PC-9 (cell line): ENCODE measurements at regions of chr22 and their contacts with region 1.

Region 1: DNA sequence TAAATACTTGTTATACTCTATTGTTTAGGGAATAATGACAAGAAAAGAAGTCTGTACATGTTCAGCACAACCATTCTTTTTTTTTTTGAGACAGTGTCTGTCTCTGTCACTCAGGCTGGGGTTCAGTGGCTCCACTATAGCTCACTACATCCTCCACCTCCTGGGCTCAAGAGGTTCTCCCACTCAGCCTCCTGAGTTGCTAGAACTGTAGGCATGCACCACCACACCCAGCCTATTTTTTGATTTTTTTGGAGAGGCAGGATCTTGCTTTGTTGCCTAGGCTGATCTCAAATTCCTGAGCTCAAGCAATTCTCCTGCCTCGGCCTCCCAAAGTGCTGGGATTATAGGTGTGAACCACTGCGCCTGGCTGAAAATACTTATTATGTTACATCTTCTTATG is 250.0 kb downstream of the MIAT start:
- DNase-seq: no peak
- H3K4me3 ChIP-seq: no peak overlapping the region
- H3K27ac ChIP-seq: no peak overlapping the region
- H3K4me1 ChIP-seq: no peaks in the 10 kb centered on the region
- H3K27me3 ChIP-seq: peaks cover 53% of the 10 kb centered on the region
- CTCF ChIP-seq: no peak

Region 2: DNA sequence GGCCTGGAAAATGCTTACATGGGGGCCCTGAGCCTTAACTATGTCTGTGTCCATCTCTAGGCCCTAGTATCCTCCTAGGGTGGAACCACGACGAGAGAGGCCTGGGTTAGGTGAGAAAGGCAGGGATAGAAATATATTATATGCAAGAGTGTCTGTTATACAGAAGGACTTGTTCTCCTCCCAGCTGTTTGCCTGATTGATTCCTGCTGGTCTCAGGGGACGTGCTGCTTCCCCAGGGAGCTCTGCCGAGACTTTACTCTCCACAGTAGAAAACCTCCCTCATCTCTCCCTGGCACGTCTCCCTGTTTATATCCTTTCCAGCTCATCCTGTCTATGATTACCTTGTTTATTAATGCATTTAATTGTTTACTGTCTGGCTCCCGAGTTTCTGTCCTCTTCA is 117.4 kb before region 1 on chr22:
- CTCF ChIA-PET with region 1: no interaction called
- POLR2A ChIA-PET with region 1: no interaction called
- intact Hi-C with region 1: no loop called
- DNase-seq: no peak
- H3K4me3 ChIP-seq: no peak overlapping the region
- H3K27ac ChIP-seq: no peak overlapping the region
- H3K4me1 ChIP-seq: no peaks in the 10 kb centered on the region
- H3K27me3 ChIP-seq: no peaks in the 10 kb centered on the region
- CTCF ChIP-seq: no peak

Region 3: DNA sequence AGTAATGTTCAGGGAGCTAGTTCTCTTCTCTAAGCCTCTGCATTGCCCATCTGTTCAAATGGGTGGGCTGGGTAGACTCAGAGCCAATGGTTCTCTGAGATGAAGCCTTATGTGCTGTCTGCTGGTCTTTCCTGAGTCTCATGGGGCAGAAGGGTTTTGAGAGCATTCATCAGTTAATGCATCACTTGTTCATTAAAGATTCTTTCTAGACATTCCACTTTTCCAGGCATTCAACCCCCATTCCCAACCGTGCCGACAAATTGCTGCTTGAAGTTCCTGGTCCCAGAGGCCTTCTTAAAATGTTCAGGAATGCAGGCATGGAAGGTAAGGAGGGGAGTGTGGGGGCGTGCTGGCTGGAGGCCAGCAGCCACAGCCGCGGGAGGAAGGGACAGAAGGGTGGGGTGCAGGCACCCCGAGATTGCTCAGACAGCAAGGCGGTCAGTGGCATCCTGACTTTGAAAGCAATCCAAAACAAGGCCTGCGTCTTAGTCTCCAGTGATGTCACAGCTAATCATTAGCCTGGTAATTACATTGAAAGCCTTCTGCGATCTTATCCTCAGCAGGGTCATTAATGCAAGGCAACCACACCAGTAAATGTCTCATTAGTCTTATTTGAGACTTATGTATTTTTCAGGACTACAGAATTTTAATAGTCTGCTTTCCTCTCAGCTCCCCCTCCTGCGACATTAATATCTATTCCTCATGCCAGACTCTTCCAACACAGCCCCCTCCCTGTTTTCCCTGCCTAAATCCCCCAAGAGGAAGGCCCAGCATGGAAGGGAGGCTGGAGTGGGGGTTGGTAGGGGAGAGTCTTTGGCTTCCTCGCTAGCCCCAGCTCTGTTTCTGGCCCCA is 78.8 kb after region 1 on chr22:
- CTCF ChIA-PET with region 1: no interaction called
- POLR2A ChIA-PET with region 1: no interaction called
- intact Hi-C with region 1: no loop called
- DNase-seq: no peak
- H3K4me3 ChIP-seq: no peak overlapping the region
- H3K27ac ChIP-seq: no peak overlapping the region
- H3K4me1 ChIP-seq: no peaks in the 10 kb centered on the region
- H3K27me3 ChIP-seq: peaks cover 55% of the 10 kb centered on the region
- CTCF ChIP-seq: no peak

Region 4: GRCh38 chr22:28656181-28656580 is 1748.8 kb after region 1 on chr22:
- CTCF ChIA-PET with region 1: no interaction called
- POLR2A ChIA-PET with region 1: interaction called, 15 read pairs
- intact Hi-C with region 1: no loop called
- DNase-seq: no peak
- H3K4me3 ChIP-seq: no peak overlapping the region
- H3K27ac ChIP-seq: no peak overlapping the region
- H3K4me1 ChIP-seq: no peaks in the 10 kb centered on the region
- H3K27me3 ChIP-seq: no peaks in the 10 kb centered on the region
- CTCF ChIP-seq: no peak